AG04449 (cell line): ENCODE measurements at regions of chr18 and their contacts with region 1.

Region 1: DNA sequence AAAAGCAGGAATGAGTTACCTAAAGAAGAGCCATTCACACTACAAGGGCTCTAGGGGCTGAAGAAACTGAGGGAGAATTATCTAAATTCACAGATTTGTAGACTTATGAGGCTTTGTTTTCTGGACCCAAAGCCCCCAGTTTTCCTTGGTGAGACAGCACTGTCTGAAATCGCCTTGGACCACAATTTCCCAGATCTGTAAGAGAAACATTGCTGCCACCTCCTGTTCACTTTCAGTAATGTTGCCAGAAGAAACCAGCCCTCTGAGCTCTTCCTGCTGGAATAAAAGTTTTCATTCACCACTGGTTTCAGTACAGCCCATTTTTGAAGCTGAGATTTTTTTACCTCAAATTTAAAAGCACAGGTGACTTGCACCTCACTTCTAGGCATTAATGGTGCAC is 169.2 kb downstream of the CDH20 start:
- DNase-seq: peak; percentile 14
- H3K4me3 ChIP-seq: no peak overlapping the region
- CTCF ChIP-seq: peak; percentile 59

Region 2: DNA sequence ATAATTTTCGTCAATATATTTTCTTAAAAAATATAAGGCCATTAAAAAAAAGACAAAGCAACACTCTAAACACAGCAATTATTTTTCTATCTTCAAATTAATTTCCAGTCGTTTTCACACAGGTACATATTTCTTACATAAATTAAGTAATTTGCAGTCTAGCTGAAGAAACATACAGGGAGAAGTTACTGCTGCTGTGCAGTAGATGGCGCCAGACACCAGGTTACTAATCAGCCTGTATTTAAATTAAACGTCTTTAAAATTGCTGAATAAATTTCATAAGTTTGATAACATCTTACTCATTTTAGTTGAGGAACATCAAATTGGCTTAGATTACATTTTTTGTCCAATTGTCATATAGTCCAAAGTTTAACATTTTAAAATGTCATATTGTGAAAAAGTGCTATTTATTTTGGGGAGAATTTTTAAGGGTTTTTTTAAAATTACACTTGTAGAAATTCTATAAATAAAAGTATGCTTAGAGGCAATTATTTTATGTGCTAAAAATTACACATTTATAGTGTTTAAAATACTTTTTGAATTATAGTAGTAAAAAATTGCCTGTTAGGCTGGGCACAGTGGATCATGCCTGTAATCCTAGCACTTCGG is 1514.3 kb before region 1 on chr18:
- CTCF ChIA-PET with region 1: interaction called, 11 read pairs
- POLR2A ChIA-PET with region 1: no interaction called
- DNase-seq: peak; percentile 9
- H3K4me3 ChIP-seq: no peak overlapping the region
- CTCF ChIP-seq: peak; percentile 75

Region 3: GRCh38 chr18:60809937-60810336 is 692.5 kb before region 1 on chr18:
- CTCF ChIA-PET with region 1: interaction called, 25 read pairs
- POLR2A ChIA-PET with region 1: no interaction called
- DNase-seq: no peak
- H3K4me3 ChIP-seq: no peak overlapping the region
- CTCF ChIP-seq: no peak

Region 4: DNA sequence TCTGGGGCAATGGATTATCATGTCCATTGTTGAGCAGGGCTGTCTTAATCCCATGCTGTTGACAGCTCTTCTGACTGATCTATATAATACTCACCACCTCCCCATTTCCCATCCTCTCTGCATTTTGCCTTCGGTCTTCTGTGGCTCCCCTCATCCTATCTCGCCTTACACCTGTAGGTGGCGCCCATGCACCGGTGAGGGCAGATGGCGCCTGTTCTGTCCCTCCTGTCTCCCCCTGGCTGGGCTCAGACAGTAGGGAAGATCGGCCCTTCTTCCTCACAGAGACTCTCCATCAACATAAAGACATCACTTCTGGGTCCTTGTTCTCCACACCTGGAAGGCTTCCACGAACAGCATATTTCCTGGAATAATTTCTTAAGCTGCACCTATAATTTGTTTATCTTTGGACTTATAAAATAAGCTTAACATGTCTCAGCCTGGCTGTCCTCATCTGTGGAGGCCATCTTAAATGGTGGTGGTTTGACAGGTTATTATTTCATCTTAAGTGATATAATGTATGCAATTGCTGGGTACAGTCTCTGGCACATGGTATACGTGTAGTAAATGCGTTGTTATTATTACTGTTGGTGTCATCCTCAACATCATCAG is 180.1 kb before region 1 on chr18:
- CTCF ChIA-PET with region 1: interaction called, 596 read pairs
- POLR2A ChIA-PET with region 1: interaction called, 3 read pairs
- DNase-seq: no peak
- H3K4me3 ChIP-seq: no peak overlapping the region
- CTCF ChIP-seq: peak; percentile 97

Region 5: DNA sequence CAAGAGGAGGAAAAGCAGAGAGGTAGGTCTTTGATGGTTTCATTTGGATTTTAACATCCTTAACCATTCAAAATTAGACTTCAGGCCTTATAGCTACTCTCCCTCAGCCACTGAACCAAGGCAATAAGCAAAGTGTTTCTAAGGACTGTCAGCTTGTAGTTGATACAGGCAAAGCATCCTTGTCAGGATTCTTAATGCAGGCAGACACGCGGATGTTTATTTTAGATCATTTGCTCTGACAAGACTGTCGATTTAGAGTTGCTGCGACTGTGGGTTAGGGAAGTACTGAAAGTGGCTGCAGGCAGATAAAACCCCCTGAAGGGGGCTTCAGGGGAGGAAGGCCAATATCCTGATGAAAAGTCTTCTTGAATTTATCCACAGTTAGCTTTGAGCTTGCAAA is 122.6 kb before region 1 on chr18:
- CTCF ChIA-PET with region 1: no interaction called
- POLR2A ChIA-PET with region 1: no interaction called
- DNase-seq: no peak
- H3K4me3 ChIP-seq: no peak overlapping the region
- CTCF ChIP-seq: no peak

Region 6: DNA sequence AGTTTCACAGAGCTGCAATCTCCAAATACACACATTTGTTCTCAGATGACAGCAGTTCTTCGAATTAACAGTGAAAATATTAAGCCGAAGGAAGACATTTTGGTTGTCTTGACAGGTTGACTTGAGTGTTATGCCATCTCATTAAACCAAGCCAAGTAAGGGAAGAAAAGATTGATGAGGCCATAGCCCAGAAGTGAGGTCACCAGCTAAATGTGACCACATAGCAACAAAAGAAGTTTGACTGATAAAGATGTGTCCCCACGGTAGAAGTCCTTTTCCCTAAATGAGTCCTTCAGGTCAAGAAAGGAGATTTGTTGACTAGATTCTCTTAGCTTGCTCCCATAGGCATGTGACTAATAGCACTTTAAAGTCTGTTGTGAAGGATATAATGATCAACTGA is 13.1 kb before region 1 on chr18:
- CTCF ChIA-PET with region 1: interaction called, 22 read pairs
- POLR2A ChIA-PET with region 1: no interaction called
- DNase-seq: no peak
- H3K4me3 ChIP-seq: no peak overlapping the region
- CTCF ChIP-seq: no peak

Region 7: GRCh38 chr18:61535401-61535800 is 32.9 kb after region 1 on chr18:
- CTCF ChIA-PET with region 1: no interaction called
- POLR2A ChIA-PET with region 1: no interaction called
- DNase-seq: no peak
- H3K4me3 ChIP-seq: no peak overlapping the region
- CTCF ChIP-seq: no peak

Region 8: DNA sequence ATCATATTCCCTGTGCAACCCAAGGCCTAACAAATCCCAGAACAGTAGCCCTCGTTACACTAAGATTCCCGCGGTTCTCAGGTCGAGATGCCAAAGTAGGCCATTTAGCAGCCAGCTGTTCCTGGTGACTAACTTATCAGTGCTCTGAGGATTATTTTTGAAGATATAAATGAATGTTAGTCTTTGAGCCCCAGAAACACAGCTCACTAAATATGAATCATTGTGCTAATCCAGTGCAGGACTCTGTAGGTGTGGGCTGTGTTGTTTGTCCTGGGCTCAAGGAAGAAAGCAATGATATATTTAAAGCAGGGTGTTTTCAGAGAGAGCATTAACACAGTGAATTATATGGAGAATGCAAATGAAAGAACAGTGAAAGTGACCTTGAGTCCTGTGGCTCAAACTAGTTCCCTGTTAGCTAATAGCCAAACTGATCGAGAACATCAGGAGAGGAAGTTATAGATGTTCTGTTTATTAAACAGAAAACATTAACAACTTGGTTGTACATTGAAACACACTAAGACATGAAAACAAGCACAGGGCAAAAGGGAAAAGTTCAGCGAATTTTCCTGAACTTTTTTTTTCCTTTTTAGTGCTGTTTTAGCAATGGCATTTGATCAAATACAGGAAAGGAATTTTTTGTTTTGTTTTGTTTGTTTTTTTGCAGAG is 162.1 kb after region 1 on chr18:
- CTCF ChIA-PET with region 1: no interaction called
- POLR2A ChIA-PET with region 1: no interaction called
- DNase-seq: no peak
- H3K4me3 ChIP-seq: no peak overlapping the region
- CTCF ChIP-seq: no peak